ENCODE measurements at regions of chrX and their contacts with region 1.

Region 1: DNA sequence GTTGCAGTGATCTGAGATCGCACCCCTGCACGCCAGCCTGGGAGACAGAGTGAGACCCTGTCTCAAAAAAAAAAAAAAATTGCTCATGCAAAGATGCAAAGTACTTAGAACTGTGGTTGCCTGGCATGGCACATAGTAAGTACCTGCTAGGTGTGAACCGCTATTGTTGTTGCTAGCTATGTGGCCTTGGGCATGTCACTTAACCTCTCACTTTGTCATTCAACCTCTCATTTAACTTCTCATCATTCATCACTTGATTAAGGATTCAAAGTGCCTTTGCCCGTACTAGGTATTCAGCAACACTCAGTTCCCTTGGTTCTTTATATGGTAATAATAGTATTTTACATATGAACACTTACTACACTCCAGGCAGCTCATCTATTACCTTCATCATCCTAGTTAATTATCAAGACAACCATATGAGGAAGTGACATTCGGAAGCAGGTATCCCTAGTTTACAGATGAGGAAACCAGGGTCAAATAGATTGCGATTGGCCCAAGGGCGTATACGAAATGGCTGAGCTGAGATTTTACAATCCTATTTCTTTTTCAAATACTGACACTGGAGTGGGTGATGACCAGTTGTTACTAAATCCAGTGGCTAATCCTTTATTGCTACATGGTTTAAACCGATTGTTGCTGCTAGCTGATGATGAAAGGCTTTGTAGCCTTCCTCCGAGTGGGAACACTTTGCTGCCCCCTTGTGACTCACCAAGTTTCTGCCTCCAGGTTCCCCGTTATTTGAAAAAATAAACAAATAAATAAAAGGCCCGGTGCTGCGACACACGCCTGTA is 28.8 kb upstream of the SOWAHD start:
- DNase-seq: peak; percentile 54
- ATAC-seq: peak; percentile 64
- H3K4me3 ChIP-seq: no peak overlapping the region
- H3K27ac ChIP-seq: no peak overlapping the region
- H3K4me1 ChIP-seq: no peaks in the 10 kb centered on the region
- H3K27me3 ChIP-seq: no peaks in the 10 kb centered on the region
- CTCF ChIP-seq: peak; percentile 85

Region 2: GRCh38 chrX:119502727-119503483 is 226.7 kb before region 1 on chrX:
- CTCF ChIA-PET with region 1: no interaction called
- POLR2A ChIA-PET with region 1: interaction called, 14 read pairs
- in situ Hi-C with region 1: no loop called
- intact Hi-C with region 1: no loop called
- DNase-seq: no peak
- ATAC-seq: peak; percentile 64
- H3K4me3 ChIP-seq: no peak overlapping the region
- H3K27ac ChIP-seq: peak overlapping the region; percentile 15; the same call in 1 of the 2 replicates
- H3K4me1 ChIP-seq: peaks cover 13% of the 10 kb centered on the region
- H3K27me3 ChIP-seq: no peaks in the 10 kb centered on the region
- CTCF ChIP-seq: no peak

Region 3: DNA sequence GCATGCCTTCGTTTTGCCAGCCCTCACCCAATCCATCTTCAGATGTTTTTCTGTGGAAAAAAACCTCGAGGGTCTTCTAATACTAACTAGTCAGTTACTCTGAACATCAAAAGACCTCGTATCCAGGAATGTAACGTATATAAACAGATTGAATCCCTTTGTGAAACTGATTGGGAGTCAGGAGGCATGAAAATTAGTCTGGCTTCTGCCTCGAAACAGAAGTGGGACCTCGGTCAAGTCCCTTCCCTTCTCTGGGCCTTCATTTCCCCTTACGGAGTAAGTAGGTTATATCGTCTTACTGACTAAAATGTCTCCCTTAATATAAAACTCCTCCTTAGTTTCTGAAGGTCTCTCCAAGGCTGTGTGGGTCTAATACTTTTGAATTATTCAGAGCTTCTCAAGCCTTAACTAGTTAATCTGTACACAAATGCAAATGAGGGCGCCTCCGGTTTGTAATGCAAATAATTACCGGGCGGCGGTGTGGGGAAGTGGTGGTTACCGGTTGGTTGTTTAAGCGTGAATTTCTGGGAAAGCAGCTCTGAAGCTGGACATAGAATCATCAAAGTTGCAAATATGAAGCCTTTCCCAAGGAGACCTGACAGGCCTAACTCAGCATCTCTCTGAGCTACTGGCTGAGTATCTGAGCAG is 112.0 kb before region 1 on chrX:
- CTCF ChIA-PET with region 1: interaction called, 7 read pairs
- POLR2A ChIA-PET with region 1: no interaction called
- in situ Hi-C with region 1: no loop called
- intact Hi-C with region 1: loop called (anchors 10 kb)
- DNase-seq: no peak
- ATAC-seq: no peak
- H3K4me3 ChIP-seq: no peak overlapping the region
- H3K27ac ChIP-seq: no peak overlapping the region
- H3K4me1 ChIP-seq: peaks cover 2% of the 10 kb centered on the region
- H3K27me3 ChIP-seq: no peaks in the 10 kb centered on the region
- CTCF ChIP-seq: no peak

Measured in Panc1 (cell line).